Posterior vena cava (tissue), 2 donors: ENCODE measurements at regions of chr3 and their contacts with region 1.

Region 1: GRCh38 chr3:46231323-46231722 is 10.9 kb upstream of the CCR3 start:
- DNase-seq: no peak

Region 2: GRCh38 chr3:45218578-45219390 is 1012.5 kb before region 1 on chr3:
- intact Hi-C with region 1: no loop called
- DNase-seq: no peak

Region 3: DNA sequence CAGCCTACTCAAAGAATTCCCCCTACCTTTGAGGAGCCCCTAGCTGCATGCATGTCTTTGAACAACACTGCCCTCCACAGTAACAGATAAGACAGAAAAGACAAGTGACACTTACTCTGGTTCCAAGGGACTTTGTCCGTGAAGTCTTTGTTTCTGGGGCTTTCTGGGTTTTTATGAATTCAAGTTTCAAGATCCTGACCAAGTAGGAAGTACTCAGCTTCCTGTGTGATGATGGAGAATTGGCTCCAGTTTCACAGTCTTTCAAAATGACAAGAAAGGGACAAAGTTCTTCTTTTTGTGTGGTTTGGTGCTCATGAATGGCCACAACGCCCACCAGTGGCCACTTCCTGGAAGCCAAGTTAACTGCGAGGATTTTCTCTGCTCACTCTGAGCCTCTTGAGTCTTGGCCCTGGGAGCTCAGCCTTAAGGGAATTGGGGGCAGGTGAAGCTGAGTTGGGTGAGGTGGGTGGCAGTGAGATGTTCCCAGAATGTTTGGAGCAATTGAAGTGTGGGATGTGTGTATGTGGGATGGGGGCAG is 23.1 kb before region 1 on chr3 and contains the start of gene CCR1:
- intact Hi-C with region 1: loop called in 1 of 2 experiments (anchors 2 kb)
- DNase-seq: peak; percentile 87
- total RNA-seq, gene CCR1: 12.0 to 23.7 TPM